ENCODE measurements at regions of chr1 and their contacts with region 1.

Region 1: DNA sequence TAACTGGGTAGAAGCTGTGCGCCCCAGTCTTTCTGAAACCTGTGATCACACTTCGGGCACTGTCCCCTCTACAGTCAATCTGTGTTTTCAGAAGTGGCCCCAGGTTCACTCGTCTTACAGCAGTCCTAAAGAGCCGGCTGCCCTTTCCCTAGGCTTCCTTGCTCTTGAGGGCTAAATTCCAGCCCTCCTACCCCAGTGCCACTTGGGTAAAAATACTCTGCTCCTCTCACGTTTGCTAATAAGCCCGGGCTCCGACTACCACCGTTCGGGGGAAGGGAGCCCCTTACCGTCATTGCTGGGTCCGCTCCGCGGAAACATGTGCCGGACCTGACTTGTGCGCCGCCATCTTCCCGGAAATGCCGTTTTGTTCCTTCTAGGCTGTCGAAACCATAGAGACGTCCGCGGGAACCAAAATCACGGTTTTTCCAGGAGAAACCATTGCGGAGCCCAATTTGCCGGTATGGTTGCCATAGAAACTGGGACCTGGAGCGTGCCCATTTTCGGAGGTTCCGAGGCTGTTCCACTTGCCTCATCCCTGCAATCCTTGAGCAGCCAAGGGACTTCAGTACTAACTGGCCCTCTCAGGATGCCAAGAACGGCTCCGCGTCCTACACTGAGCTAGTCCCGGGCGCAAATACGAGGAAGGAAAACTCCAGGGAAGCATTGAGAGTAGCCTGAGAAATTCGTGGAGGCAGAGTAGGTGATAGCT is at the start of gene GPATCH4:
- DNase-seq: peak; percentile 89
- total RNA-seq, gene GPATCH4: 15.5 TPM

Region 2: DNA sequence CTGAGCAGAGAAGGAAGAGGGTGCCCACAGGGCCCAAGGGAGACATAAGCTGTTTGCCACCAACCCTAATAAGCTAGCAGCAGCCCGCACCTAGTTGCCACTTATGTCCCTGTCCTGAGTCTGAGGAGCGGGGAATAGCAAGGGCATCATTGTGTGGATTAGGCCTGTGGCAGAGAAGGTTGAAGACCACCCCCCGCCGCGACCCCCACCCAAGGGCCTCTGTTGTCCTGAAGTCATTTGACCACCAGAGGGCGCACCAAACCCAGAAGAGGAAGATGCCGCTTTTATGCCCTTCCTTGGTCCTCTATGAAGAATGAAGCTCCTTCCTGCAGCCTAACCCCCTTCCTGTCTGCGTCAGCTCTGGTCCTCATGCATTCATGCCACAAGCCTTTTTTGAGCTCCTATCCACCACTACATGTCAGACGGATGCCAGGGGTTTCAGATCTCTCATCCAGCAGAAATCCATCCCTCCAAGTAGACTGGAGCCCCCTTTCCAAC is 215.7 kb before region 1 on chr1:
- intact Hi-C with region 1: loop called (anchors 2 kb)
- DNase-seq: no peak

Region 3: DNA sequence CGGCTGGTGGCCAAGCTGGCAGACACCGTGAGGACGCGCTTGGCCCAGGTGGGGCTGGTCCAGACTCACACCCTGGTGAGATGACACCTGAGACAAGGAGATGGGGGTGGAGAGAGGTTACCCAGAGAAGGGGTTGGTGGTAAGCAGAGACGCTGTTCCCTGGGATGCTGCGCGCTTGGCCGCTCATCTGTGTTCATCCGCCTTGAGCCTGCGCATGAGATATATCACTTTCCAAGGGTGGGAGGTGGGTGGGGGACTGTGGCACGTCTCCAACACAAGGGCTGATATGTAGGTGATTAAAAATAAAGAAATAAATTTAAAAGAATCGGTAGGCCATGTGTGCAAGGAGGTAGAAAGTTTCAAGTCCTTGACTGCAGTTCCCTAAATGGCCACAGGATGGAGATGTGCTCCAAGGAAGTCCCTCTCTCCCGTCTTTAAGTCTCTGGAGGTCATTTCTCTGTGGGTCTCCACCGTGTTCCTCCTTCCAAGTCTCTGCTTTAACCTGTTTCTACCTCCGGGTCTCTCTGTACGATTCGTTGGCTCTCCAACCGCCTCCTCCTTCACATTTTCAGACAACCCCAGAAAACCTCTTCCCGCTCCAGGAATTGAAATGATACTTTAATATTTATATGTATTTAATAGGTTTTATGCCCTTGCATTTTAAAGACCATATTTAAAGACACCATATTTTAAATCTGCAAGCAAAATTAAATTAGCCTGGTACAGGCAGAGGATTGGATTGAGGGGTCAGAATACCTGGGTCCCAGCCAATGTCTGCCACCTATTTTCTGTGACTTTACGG is 17.3 kb before region 1 on chr1:
- intact Hi-C with region 1: loop called (anchors 2 kb)
- DNase-seq: no peak

Measured in cardiac septum (tissue), 1 donor.